OCI-LY7 (cell line): ENCODE measurements at regions of chr14 and their contacts with region 1.

Region 1: GRCh38 chr14:53152890-53153701 is at the start of gene DDHD1:
- DNase-seq: peak; percentile 89
- H3K4me3 ChIP-seq: peak within 1 kb of the TSS; percentile 85
- H3K27ac ChIP-seq: peak within 1 kb of the TSS; percentile 81
- H3K4me1 ChIP-seq: peaks cover 31% of the 10 kb centered on the region
- CTCF ChIP-seq: no peak
- total RNA-seq, gene DDHD1: 26.7 and 28.7 TPM in 2 replicates

Region 2: GRCh38 chr14:53055003-53055402 is 98.1 kb before region 1 on chr14:
- CTCF ChIA-PET with region 1: no interaction called
- POLR2A ChIA-PET with region 1: no interaction called
- intact Hi-C with region 1: loop called (anchors 5 kb)
- DNase-seq: peak; percentile 51
- H3K4me3 ChIP-seq: no peak overlapping the region
- H3K27ac ChIP-seq: no peak overlapping the region
- H3K4me1 ChIP-seq: no peaks in the 10 kb centered on the region
- CTCF ChIP-seq: peak; percentile 91

Region 3: DNA sequence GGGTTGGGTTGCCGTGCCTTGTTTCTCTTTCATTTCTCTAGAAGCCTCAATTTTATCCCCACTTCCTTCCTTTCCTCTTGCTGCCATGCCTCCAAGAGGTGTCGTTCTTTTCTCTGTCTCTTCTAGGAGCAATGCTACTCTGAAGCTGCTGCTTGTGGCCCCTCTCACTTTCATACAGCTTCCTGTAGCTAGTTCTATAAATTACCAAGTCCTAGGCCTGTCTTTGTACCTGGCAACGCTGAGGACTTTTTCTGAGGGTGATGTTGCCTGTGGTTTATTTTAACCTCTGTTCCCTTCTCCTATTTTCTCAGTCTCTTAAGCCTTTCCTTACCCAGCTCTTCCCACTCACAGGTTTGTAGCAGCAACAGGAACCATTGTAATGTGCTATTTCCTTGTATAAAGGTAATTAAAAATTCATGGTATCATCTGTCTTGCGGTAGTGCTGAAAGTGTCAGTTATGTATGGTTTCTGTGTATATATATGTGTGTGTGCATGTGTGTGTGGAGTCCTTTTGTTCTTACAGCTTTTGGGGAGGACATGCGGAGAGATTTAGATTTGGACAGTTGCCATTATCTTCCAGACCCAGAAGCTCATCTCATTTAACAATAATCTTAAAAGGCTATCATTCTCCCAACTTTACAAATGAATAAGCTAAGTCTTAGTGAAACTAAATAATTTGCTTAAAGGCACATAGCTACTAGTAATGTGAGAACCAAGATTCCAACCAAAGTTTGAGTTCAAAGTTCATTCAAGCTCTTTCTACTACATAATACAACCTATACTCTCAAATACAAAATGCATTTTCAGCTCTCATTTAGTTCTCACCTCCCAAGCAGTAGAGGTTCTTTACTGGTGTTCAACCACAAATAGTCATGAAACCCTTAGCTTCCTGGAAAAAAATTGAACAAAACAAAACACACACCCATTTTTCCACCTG is 43.7 kb before region 1 on chr14:
- CTCF ChIA-PET with region 1: interaction called, 3 read pairs
- POLR2A ChIA-PET with region 1: interaction called, 38 read pairs
- intact Hi-C with region 1: loop called (anchors 1 kb)
- DNase-seq: peak; percentile 43
- H3K4me3 ChIP-seq: peak overlapping the region; percentile 53
- H3K27ac ChIP-seq: peak overlapping the region; percentile 69
- H3K4me1 ChIP-seq: peaks cover 25% of the 10 kb centered on the region
- CTCF ChIP-seq: no peak

Region 4: DNA sequence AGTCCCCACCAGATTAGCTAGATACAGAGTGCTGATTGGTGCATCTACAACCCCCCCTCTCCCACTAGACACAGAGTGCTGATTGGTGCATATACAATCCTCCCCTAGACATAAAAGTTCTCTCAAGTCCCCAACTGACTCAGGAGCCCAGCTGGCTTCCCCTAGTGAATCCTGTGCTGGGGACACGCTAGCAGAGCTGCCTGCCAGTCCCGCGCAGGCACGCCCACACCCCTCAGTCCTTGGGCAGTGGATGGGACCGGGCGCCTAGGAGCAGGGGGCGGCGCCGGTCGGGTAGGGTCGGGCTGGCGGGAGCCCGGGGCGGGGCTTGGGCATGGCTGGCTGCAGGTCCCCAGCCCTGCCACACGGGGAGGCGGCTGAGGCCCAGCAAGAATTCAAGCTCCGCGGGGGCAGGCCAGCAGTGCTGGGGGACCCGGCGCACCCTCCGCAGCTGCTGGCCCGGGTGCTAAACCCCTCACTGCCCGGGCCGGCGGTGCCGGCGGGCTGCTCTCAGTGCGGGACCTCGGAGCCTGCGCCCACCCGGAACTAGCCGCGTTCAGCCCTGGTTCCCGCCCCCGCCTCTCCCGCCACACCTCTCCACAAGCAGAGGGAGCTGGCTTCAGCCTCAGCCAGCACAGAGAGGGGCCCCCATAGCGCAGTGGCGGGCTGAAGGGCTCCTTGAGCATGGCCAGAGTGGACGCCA is 64.3 kb after region 1 on chr14:
- CTCF ChIA-PET with region 1: no interaction called
- POLR2A ChIA-PET with region 1: interaction called, 7 read pairs
- intact Hi-C with region 1: loop called (anchors 5 kb)
- DNase-seq: peak; percentile 85
- H3K4me3 ChIP-seq: peak overlapping the region; percentile 70
- H3K27ac ChIP-seq: peak overlapping the region; percentile 16
- H3K4me1 ChIP-seq: peaks cover 8% of the 10 kb centered on the region
- CTCF ChIP-seq: peak; percentile 66

Region 5: DNA sequence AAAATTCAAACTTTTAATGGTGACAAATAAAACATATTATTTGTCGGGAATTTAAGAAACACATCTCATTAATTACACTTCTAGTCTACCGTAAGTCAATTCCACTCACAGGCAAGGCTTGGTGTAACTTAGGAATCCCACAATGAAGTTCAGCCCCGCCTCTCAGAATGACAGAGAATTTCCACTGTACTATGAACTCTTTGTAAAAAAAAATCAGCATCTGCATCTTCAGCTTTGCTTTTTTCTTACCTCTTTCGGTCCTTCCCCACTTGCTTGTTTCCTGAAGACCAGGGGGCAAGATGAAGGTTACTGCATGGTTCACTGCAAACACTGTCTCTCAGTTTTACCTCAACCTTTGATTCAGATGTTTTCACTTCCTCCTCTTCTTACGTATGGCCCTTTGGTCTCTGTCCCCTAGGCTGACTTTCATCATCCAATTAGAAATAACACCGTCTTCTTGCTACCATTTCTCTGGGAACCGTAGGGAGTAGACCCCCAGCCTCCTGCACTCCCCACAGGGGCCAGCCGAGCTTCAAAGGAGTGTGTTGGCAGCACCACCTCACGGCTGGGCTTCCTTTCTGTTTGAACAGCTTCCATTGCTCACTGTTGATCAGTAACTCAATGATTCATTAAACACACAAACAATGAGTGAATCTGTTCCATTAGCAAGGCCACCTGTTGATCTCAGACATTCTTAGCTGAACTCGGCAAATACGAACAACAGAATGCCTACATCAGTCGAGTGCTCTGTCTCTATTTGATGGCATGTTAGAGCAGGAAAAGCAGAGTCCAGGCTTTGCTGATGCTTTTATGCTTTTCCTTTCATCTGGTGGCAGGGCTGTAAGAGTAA is 460.5 kb after region 1 on chr14:
- CTCF ChIA-PET with region 1: no interaction called
- POLR2A ChIA-PET with region 1: no interaction called
- intact Hi-C with region 1: loop called (anchors 2 kb)
- DNase-seq: peak; percentile 96
- H3K4me3 ChIP-seq: peak overlapping the region; percentile 69
- H3K27ac ChIP-seq: peak overlapping the region; percentile 95
- H3K4me1 ChIP-seq: peaks cover 64% of the 10 kb centered on the region
- CTCF ChIP-seq: peak; percentile 44; the same call in 1 of the 2 replicates